ENCODE measurements at regions of chr3 and their contacts with region 1.

Region 1: DNA sequence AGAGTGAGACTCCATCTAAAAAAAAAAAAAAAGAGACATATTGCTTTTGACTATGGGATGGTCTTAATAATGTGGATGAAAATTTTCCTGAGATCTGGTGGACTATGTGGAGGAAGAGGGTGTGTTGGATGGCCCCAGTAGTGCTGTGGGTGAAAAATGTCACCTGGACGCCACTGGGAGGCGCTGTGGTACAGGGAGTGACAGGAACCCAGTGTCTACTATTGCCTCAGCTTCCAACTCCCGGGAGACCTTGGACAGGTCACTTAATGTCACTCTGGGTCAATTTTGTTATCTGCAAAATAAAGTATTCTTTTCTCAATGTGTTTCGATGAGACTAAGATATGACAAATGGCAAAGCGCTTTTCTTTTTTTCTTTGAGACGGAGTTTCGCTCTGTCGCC is 27.7 kb upstream of the DCP1A start:
- DNase-seq: peak; percentile 82
- H3K4me3 ChIP-seq: peak overlapping the region in 1 of 2 experiments; percentile 29; a peak in 1 of 4 replicates
- H3K27ac ChIP-seq: no peak overlapping the region
- H3K4me1 ChIP-seq: no peaks in the 10 kb centered on the region
- H3K27me3 ChIP-seq: no peaks in the 10 kb centered on the region
- CTCF ChIP-seq: peak; percentile 76
- EP300 ChIP-seq: no peak
- RAD21 ChIP-seq: peak; percentile 99

Region 2: DNA sequence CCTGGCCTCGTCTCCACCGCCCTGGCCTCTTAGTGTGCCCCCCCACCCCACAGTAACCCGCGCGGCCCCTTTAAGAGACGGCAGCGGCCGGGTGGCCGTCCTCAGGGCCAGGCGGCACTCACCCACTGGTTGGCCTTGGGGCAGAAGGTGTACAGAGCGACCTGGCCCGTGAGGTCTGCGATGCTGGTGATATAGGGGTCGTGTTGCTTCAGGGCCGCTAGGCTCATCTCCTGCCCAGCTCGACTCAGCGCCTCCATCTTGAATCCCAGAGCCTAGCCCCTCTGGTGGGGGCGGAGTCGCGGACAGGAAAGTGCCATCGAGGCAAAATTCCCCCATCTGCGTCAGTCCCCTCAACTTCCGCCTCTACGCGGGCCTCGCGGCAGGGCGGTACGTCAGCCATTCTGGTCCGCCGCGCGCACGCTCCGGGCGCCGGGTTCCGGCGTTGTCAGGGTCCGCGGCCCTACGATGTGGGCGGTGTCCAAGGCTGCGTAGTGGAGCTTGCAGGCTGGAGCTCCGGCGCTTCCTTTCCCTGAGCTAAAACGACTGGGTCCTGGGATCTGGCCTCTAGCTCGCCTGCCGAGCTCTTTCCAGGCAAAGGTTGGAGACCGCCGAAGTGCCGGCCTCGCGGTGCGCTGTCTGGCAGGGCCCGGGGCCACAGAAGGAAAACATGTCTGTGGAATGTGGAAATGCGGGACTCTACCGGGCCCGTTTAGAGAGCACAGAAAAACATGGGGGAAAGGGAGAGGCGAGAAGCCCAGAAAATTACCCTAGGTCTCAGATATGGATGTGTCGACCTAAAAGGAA is 27.6 kb before region 1 on chr3 and contains the start of gene DCP1A:
- CTCF ChIA-PET with region 1: interaction called, 10 read pairs
- POLR2A ChIA-PET with region 1: interaction called, 4 read pairs
- DNase-seq: peak; percentile 96
- H3K4me3 ChIP-seq: peak within 1 kb of the TSS; percentile 80 to 86
- H3K27ac ChIP-seq: peak within 1 kb of the TSS; percentile 77 to 94
- H3K4me1 ChIP-seq: peaks cover 9 to 13% of the 10 kb centered on the region in 2 experiments; a peak in 3 of 4 replicates
- H3K27me3 ChIP-seq: no peaks in the 10 kb centered on the region
- CTCF ChIP-seq: no peak
- EP300 ChIP-seq: peak in 1 of 2 experiments; percentile 50; a peak in 1 of 4 replicates
- RAD21 ChIP-seq: no peak
- polyA plus RNA-seq, gene DCP1A: 12.9 and 17.4 TPM in 2 replicates

Region 3: GRCh38 chr3:53361852-53362251 is 13.2 kb before region 1 on chr3:
- CTCF ChIA-PET with region 1: interaction called, 14 read pairs
- POLR2A ChIA-PET with region 1: no interaction called
- DNase-seq: no peak
- H3K4me3 ChIP-seq: no peak overlapping the region
- H3K27ac ChIP-seq: no peak overlapping the region
- H3K4me1 ChIP-seq: no peaks in the 10 kb centered on the region
- H3K27me3 ChIP-seq: no peaks in the 10 kb centered on the region
- CTCF ChIP-seq: no peak
- EP300 ChIP-seq: no peak
- RAD21 ChIP-seq: no peak

Region 4: GRCh38 chr3:53677413-53677812 is 302.4 kb after region 1 on chr3:
- CTCF ChIA-PET with region 1: interaction called, 11 read pairs
- POLR2A ChIA-PET with region 1: no interaction called
- DNase-seq: peak; percentile 40
- H3K4me3 ChIP-seq: no peak overlapping the region
- H3K27ac ChIP-seq: no peak overlapping the region
- H3K4me1 ChIP-seq: peaks cover 0 to 41% of the 10 kb centered on the region in 2 experiments; a peak in 2 of 4 replicates
- H3K27me3 ChIP-seq: no peaks in the 10 kb centered on the region; the same call in 1 of the 2 replicates
- CTCF ChIP-seq: peak; percentile 33; the same call in 1 of the 2 replicates
- EP300 ChIP-seq: no peak
- RAD21 ChIP-seq: peak; percentile 62

Measured in SK-N-SH (cell line).